ENCODE measurements at regions of chr19 and their contacts with region 1.

Region 1: DNA sequence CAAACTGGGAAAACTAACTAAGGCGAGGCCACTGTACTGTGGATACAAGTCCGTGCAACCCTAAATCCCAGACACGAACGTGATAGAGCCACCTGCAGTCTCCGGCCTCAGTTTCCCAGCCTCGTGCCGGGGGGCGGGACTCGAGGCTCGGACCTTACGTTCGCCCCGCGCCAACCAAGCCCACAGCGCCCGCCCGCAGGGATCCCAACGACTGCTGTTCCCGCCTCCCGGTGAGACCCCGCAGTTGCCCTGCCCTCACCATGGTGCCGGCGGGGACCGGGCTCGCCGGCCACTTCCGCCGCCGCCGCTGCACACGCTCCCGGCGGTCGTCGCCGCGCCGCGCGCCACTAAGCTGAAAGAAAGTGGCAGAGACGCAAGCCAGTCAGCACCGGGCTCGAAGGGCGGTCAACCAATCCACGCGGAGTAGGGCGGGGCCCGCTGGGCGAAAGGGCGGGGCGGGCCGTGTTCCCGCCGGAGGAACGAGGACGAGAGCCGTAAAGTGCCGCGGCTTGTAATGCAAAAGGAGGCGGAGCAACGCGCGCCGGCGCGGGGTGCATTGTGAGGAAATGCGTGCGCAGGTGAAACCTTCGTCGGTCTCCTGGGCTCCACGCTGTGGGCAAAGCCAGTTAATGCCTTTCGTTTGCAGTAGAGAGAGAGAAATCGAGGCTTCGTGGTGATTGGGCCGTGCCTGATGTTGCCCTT is at the start of gene LSM4:
- DNase-seq: peak; percentile 99
- H3K4me3 ChIP-seq: peak within 1 kb of the TSS; percentile 61 to 91 (median 84)
- H3K27ac ChIP-seq: peak within 1 kb of the TSS; percentile 90 to 93 (median 92)
- H3K4me1 ChIP-seq: peaks cover 0 to 45% (median 37%) of the 10 kb centered on the region in 4 donors
- H3K27me3 ChIP-seq: no peaks in the 10 kb centered on the region
- CTCF ChIP-seq: no peak
- EP300 ChIP-seq: no peak
- POLR2A ChIP-seq: peak; percentile 53 to 75
- total RNA-seq, gene LSM4: 89.1 to 144 (median 119) TPM

Region 2: DNA sequence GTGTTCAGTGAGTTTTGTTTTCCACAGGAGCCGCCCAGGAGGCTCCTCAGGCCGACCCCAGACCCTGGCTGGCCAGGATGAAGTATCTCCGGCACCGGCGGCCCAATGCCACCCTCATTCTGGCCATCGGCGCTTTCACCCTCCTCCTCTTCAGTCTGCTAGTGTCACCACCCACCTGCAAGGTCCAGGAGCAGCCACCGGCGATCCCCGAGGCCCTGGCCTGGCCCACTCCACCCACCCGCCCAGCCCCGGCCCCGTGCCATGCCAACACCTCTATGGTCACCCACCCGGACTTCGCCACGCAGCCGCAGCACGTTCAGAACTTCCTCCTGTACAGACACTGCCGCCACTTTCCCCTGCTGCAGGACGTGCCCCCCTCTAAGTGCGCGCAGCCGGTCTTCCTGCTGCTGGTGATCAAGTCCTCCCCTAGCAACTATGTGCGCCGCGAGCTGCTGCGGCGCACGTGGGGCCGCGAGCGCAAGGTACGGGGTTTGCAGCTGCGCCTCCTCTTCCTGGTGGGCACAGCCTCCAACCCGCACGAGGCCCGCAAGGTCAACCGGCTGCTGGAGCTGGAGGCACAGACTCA is 515.1 kb before region 1 on chr19:
- intact Hi-C with region 1: no loop called
- DNase-seq: no peak
- H3K4me3 ChIP-seq: no peak overlapping the region
- H3K27ac ChIP-seq: no peak overlapping the region
- H3K4me1 ChIP-seq: no peaks in the 10 kb centered on the region
- H3K27me3 ChIP-seq: peaks cover 0 to 12% (median 6%) of the 10 kb centered on the region in 3 donors
- CTCF ChIP-seq: no peak
- EP300 ChIP-seq: no peak
- POLR2A ChIP-seq: no peak

Region 3: DNA sequence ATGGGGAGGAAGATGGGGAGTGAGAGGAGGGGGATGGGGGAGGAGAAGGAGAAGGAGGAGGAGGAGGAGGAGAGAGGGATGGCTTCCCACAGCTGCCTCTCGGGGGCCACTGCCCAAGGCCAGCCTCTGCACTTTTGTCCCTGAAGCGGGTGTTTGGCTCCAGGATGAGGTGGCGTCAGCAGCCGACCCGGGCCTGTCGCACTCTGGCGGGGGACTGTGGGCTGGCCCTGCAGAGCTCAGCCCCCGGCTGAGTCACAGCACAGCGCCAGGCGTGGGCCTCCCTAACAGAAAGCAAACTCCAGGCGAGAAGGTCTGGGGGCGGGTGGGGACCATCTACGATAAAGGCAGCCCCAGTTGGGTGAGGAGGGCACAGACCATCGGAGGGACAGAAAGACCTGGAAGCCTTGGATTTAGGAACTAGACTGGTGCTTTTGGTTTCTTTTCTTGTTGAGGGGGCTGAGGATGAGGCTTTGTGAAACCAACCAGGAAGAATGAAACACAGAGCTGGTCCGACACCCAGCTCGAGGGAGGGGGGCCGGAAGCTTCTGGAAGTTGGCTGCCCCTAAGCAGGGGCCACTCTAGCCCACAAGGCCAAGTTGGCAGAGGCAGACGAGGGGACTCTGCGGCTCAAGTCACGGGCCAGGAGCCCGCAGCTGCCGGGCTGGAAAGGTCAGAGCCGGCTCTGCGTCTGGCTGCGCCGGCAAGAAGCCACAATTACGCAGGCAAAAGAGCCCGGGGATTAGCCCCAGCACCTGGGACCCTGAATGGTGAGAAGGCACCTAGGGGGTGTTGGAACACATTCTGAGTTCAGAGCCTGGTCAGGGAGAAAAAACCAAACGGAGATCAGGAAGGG is 18.2 kb before region 1 on chr19:
- intact Hi-C with region 1: loop called (anchors 2 kb)
- DNase-seq: peak; percentile 94
- H3K4me3 ChIP-seq: peak overlapping the region; percentile 20 to 42 (median 37)
- H3K27ac ChIP-seq: peak overlapping the region; percentile 93 to 97 (median 96)
- H3K4me1 ChIP-seq: peaks cover 0 to 75% (median 62%) of the 10 kb centered on the region in 4 donors
- H3K27me3 ChIP-seq: no peaks in the 10 kb centered on the region
- CTCF ChIP-seq: no peak
- EP300 ChIP-seq: no peak
- POLR2A ChIP-seq: peak; percentile 63 to 67